A673 (cell line): ENCODE measurements at regions of chr15 and their contacts with region 1.

Region 1: GRCh38 chr15:77419836-77420609 is at the start of gene PEAK1:
- DNase-seq: peak; percentile 100
- H3K4me3 ChIP-seq: peak within 1 kb of the TSS; percentile 73
- H3K27ac ChIP-seq: peak within 1 kb of the TSS; percentile 97
- H3K4me1 ChIP-seq: peaks cover 41% of the 10 kb centered on the region
- H3K27me3 ChIP-seq: no peaks in the 10 kb centered on the region
- CTCF ChIP-seq: no peak
- total RNA-seq, gene PEAK1: 36.7 and 39.8 TPM in 2 replicates

Region 2: GRCh38 chr15:77224352-77224751 is 195.7 kb before region 1 on chr15:
- CTCF ChIA-PET with region 1: no interaction called
- POLR2A ChIA-PET with region 1: no interaction called
- intact Hi-C with region 1: loop called (anchors 5 kb)
- DNase-seq: peak; percentile 96
- H3K4me3 ChIP-seq: peak overlapping the region; percentile 8
- H3K27ac ChIP-seq: peak overlapping the region; percentile 54
- H3K4me1 ChIP-seq: peaks cover 54% of the 10 kb centered on the region
- H3K27me3 ChIP-seq: no peaks in the 10 kb centered on the region
- CTCF ChIP-seq: no peak

Region 3: GRCh38 chr15:77695961-77696582 is 276.0 kb after region 1 on chr15:
- CTCF ChIA-PET with region 1: no interaction called
- POLR2A ChIA-PET with region 1: no interaction called
- intact Hi-C with region 1: no loop called
- DNase-seq: no peak
- H3K4me3 ChIP-seq: no peak overlapping the region
- H3K27ac ChIP-seq: no peak overlapping the region
- H3K4me1 ChIP-seq: no peaks in the 10 kb centered on the region
- H3K27me3 ChIP-seq: no peaks in the 10 kb centered on the region
- CTCF ChIP-seq: no peak